Activated CD4-positive, alpha-beta T cell treated with anti-CD3 and anti-CD28 coated beads for 36 hours (primary cell): ENCODE measurements at regions of chr1 and their contacts with region 1.

Region 1: DNA sequence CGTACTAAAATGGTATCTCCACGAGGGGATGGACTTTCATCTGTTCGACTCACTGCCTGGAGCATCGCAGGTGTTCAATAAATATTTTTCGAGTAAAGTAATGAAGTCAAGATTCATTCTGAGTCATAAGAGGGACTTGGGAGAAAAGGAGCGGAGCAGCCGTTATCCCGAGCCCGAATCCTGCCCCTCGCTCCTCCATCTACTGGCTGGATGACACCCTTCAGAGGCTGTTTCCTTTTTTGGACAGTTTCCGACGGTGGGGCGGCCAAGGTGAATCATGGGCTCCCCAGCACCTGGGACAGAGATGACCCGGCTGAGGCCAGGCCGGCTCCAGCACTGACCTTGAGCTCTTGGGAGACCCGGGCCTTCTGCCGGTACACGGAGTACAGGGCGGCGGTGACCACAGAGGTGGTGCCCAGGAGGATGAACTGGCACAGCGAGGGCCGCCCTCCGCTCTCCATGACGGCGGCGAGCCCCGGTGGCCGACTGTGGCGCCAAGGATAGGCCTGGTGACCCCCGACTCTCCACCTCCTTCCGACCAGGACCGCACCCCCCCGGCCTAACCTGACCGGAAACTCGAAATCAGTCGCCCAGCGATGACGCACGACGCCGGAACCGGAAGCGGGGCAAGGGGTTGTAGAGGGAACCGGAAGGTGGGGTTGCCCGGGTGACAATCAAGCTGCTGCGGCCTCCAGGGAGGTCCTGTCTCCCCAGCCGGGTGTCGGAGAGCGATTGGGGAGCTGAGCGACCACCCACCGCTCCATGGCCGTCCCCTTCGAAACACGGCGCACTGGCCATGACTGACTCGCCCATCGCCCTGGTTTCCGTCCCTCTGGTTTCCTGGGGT is at the start of gene MUL1:
- DNase-seq: peak; percentile 96
- ATAC-seq: peak; percentile 96
- H3K4me3 Mint-ChIP-seq: peak within 1 kb of the TSS; percentile 79
- H3K27ac Mint-ChIP-seq: peak within 1 kb of the TSS; percentile 65
- H3K4me1 Mint-ChIP-seq: peaks cover 17% of the 10 kb centered on the region
- H3K27me3 Mint-ChIP-seq: peaks cover 2% of the 10 kb centered on the region
- total RNA-seq, gene MUL1: 9.0 to 13.1 TPM

Region 2: GRCh38 chr1:20661207-20662109 is 153.7 kb after region 1 on chr1 and contains the start of gene DDOST:
- CTCF ChIA-PET with region 1: no interaction called
- POLR2A ChIA-PET with region 1: interaction called, 7 read pairs
- intact Hi-C with region 1: loop called in 1 of 2 experiments (anchors 1 kb)
- DNase-seq: peak; percentile 97
- ATAC-seq: peak; percentile 97
- H3K4me3 Mint-ChIP-seq: peak within 1 kb of the TSS; percentile 91
- H3K27ac Mint-ChIP-seq: peak within 1 kb of the TSS; percentile 100
- H3K4me1 Mint-ChIP-seq: peaks cover 35% of the 10 kb centered on the region
- H3K27me3 Mint-ChIP-seq: no peaks in the 10 kb centered on the region
- total RNA-seq, gene DDOST: 112 to 136 TPM